A673 (cell line): ENCODE measurements at regions of chr1 and their contacts with region 1.

Region 1: GRCh38 chr1:67766141-67766978 is 66.9 kb downstream of the GNG12 start:
- DNase-seq: peak; percentile 75
- H3K4me3 ChIP-seq: no peak overlapping the region
- H3K27ac ChIP-seq: no peak overlapping the region
- H3K4me1 ChIP-seq: no peaks in the 10 kb centered on the region
- H3K27me3 ChIP-seq: no peaks in the 10 kb centered on the region
- CTCF ChIP-seq: peak; percentile 81

Region 2: DNA sequence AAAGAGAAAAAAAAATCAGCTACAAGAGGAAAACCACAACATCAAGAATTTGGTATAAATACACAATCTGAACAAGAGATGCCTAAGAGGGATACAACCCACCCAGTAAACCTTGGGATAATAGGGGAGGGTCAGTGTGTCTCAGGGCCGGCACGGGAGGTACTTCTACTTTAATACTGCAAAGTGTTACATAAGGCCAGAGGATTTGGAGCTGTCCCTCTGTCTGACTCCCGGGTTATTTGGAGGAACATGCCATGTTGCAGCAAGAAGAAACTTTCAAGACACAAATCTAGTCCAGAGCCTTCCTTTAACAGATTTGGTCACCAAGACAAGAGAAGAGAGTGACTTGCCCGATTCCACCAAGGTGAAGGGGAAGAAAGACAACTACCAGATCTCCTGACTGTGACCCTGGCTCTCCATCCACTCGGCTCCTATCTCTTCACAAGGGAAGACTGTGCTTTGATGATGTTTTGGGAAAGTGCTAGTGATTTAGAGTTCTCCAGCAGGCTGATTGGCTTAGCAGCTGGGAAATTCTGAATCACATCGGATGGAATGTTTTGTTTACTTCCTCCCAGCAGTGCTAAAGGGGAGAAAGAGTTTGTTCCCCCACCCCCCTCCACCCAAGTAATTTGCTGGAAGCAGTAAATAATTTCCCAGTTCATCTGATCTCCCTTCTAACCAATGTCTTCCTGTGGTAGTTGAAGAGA is 1203.1 kb before region 1 on chr1:
- CTCF ChIA-PET with region 1: no interaction called
- POLR2A ChIA-PET with region 1: no interaction called
- intact Hi-C with region 1: no loop called
- DNase-seq: no peak
- H3K4me3 ChIP-seq: no peak overlapping the region
- H3K27ac ChIP-seq: no peak overlapping the region
- H3K4me1 ChIP-seq: no peaks in the 10 kb centered on the region
- H3K27me3 ChIP-seq: no peaks in the 10 kb centered on the region
- CTCF ChIP-seq: no peak

Region 3: DNA sequence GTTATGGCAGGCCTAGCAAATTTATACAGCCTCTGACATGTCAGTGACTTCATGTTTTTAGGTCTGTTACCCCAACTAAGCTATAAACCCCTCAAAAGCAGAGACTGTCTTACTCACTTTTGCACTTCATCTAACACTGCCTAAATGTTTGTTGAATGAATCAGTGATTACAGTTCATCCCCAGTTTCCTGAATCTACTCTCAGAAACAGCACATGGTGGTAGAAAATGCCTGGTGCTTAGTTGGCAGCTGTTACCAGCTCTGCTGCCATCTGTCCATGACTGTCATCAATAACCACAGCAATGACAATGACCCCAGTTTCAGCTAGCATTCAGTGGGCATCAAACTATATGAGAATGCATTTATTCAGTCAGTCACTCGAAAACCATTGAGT is 225.6 kb before region 1 on chr1:
- CTCF ChIA-PET with region 1: no interaction called
- POLR2A ChIA-PET with region 1: no interaction called
- intact Hi-C with region 1: no loop called
- DNase-seq: no peak
- H3K4me3 ChIP-seq: no peak overlapping the region
- H3K27ac ChIP-seq: no peak overlapping the region
- H3K4me1 ChIP-seq: no peaks in the 10 kb centered on the region
- H3K27me3 ChIP-seq: no peaks in the 10 kb centered on the region
- CTCF ChIP-seq: no peak

Region 4: GRCh38 chr1:67832737-67833601 is 66.6 kb after region 1 on chr1 and contains the start of gene GNG12:
- CTCF ChIA-PET with region 1: interaction called, 8 read pairs
- POLR2A ChIA-PET with region 1: interaction called, 5 read pairs
- intact Hi-C with region 1: loop called (anchors 2 kb)
- DNase-seq: peak; percentile 76
- H3K4me3 ChIP-seq: peak within 1 kb of the TSS; percentile 74
- H3K27ac ChIP-seq: peak within 1 kb of the TSS; percentile 89
- H3K4me1 ChIP-seq: peaks cover 67% of the 10 kb centered on the region
- H3K27me3 ChIP-seq: no peaks in the 10 kb centered on the region
- CTCF ChIP-seq: no peak
- total RNA-seq, gene GNG12: 48.1 and 54.8 TPM in 2 replicates

Region 5: GRCh38 chr1:67853704-67854103 is 87.3 kb after region 1 on chr1:
- CTCF ChIA-PET with region 1: interaction called, 5 read pairs
- POLR2A ChIA-PET with region 1: no interaction called
- intact Hi-C with region 1: loop called (anchors 5 kb)
- DNase-seq: peak; percentile 83
- H3K4me3 ChIP-seq: no peak overlapping the region
- H3K27ac ChIP-seq: no peak overlapping the region
- H3K4me1 ChIP-seq: no peaks in the 10 kb centered on the region
- H3K27me3 ChIP-seq: no peaks in the 10 kb centered on the region
- CTCF ChIP-seq: peak; percentile 77

Region 6: DNA sequence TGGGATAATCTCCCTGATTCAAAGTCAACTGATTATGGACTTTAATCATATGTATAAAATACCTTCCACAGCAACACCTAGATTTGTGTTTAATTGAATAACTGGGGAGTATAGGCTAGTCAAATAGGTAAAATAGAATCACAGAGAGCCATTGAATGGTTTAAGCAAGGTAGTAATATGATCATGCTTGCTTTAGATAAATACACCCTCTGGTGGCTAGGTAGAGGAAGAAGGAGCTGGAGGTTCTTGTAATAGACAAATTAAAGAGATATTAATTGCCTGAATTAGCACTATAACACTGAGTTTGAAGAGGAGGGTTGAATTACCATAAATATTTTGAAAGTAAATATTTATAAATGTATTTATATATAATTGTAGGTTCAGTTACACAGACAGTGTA is 243.7 kb after region 1 on chr1:
- CTCF ChIA-PET with region 1: interaction called, 8 read pairs
- POLR2A ChIA-PET with region 1: no interaction called
- intact Hi-C with region 1: loop called (anchors 2 kb)
- DNase-seq: peak; percentile 21
- H3K4me3 ChIP-seq: no peak overlapping the region
- H3K27ac ChIP-seq: no peak overlapping the region
- H3K4me1 ChIP-seq: peaks cover 6% of the 10 kb centered on the region
- H3K27me3 ChIP-seq: no peaks in the 10 kb centered on the region
- CTCF ChIP-seq: peak; percentile 42

Region 7: DNA sequence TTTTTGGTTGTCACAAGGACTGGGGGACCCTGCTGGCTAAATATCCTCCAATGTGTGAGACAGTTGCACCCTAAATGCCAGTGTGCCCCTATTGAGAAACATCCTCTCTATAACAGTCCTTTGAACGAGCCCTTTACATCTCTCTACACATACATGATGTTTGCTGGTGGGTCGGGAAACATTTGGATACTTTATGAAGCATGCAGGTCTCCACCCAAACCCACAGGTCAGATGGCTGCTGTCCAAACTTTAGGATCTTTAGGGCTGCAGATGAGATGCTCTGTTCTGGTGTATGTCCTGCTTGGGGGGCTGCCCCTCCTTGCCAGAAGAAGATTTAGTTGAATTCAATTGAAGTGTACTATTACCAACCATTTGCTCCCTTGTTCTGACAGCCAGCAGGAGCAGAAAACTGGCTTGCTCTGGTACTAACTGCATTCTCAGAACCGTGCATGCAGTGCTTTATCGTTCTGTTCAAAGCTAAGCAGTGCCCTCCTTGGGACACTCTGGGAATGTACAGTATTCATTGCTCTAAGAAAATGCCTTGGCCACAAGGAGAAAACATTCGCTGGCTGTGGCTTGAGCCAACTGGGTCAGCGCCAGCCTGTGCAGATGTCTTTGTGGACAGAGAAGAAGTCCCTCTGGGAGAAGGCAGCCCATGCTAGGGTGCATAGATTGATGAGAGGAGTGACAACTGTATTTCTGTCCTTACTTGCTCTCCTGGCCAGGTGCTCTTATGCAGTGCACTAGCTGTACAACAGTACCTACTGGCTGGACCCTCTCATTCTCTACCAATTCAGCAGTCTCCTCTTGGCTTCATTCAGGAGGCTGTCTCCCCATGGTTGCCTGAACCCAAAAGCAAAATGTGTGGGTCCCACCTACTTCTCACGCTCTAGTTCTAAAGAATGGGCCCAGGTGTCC is 345.4 kb after region 1 on chr1:
- CTCF ChIA-PET with region 1: interaction called, 3 read pairs
- POLR2A ChIA-PET with region 1: no interaction called
- intact Hi-C with region 1: loop called (anchors 5 kb)
- DNase-seq: peak; percentile 65
- H3K4me3 ChIP-seq: no peak overlapping the region
- H3K27ac ChIP-seq: no peak overlapping the region
- H3K4me1 ChIP-seq: no peaks in the 10 kb centered on the region
- H3K27me3 ChIP-seq: no peaks in the 10 kb centered on the region
- CTCF ChIP-seq: peak; percentile 64